B cell (primary cell): ENCODE measurements at regions of chr22 and their contacts with region 1.

Region 1: GRCh38 chr22:31943976-31944699 is at the start of gene YWHAH:
- DNase-seq: peak; percentile 96
- ATAC-seq: peak; percentile 85
- H3K4me3 ChIP-seq: peak within 1 kb of the TSS; percentile 67 to 78 (median 75)
- H3K4me3 Mint-ChIP-seq: no peak within 1 kb of the TSS
- H3K27ac ChIP-seq: peak within 1 kb of the TSS; percentile 82 to 85
- H3K27ac Mint-ChIP-seq: peak within 1 kb of the TSS; percentile 97
- H3K4me1 ChIP-seq: peaks cover 29 to 31% of the 10 kb centered on the region in 2 donors
- H3K4me1 Mint-ChIP-seq: peaks cover 18% of the 10 kb centered on the region
- H3K27me3 ChIP-seq: no peaks in the 10 kb centered on the region
- H3K27me3 Mint-ChIP-seq: no peaks in the 10 kb centered on the region
- CTCF ChIP-seq: no peak
- total RNA-seq, gene YWHAH: 46.6 and 51.1 TPM in 2 replicates

Region 2: DNA sequence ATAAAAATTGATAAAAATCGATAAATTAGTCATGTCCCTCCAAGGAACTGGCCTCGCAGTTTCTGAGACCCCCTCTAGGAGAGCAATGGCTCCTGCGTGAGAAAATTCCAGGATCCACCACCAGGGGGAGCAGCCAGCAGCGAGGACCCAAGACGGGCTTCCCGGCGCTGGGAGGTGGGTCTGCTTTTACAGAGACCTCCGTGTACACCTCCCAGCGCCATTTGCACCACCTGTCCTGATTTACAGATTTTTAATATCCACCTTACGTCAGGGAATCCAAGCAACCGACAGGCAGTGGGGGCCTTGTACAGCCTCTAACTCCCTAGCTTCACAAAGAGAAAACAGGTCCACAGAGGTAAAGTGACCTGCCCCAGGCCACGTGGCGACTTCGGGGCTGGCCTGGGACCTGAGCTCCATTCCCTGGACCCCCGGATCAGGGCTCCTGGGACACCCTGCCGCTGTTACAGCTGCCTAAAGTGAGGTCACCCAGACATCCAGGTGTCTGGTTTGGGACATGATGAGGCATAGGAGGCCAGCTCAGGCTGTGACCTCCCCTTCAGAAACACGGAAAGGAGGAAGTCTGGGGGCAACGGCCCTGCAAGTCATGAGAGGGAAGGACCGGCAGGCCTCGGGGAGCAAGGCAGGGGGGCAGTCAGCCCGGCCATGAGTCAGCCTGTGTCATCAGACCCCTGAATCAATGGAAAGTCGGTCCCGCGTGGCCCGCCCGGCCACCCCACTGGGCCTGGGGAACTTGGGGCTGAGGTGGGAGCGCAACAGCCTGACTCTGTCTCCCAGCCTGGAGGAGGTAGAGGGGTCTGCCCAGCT is 1681.0 kb before region 1 on chr22:
- CTCF ChIA-PET with region 1: no interaction called
- POLR2A ChIA-PET with region 1: no interaction called
- intact Hi-C with region 1: loop called (anchors 5 kb)
- DNase-seq: peak; percentile 86
- ATAC-seq: no peak
- H3K4me3 ChIP-seq: peak overlapping the region in 3 of 5 experiments; percentile 13 to 42 (median 27)
- H3K4me3 Mint-ChIP-seq: peak overlapping the region; percentile 67
- H3K27ac ChIP-seq: no peak overlapping the region
- H3K27ac Mint-ChIP-seq: peak overlapping the region; percentile 37
- H3K4me1 ChIP-seq: peaks cover 20 to 35% of the 10 kb centered on the region in 2 donors
- H3K4me1 Mint-ChIP-seq: peaks cover 31% of the 10 kb centered on the region
- H3K27me3 ChIP-seq: no peaks in the 10 kb centered on the region
- H3K27me3 Mint-ChIP-seq: no peaks in the 10 kb centered on the region
- CTCF ChIP-seq: peak; percentile 100

Region 3: DNA sequence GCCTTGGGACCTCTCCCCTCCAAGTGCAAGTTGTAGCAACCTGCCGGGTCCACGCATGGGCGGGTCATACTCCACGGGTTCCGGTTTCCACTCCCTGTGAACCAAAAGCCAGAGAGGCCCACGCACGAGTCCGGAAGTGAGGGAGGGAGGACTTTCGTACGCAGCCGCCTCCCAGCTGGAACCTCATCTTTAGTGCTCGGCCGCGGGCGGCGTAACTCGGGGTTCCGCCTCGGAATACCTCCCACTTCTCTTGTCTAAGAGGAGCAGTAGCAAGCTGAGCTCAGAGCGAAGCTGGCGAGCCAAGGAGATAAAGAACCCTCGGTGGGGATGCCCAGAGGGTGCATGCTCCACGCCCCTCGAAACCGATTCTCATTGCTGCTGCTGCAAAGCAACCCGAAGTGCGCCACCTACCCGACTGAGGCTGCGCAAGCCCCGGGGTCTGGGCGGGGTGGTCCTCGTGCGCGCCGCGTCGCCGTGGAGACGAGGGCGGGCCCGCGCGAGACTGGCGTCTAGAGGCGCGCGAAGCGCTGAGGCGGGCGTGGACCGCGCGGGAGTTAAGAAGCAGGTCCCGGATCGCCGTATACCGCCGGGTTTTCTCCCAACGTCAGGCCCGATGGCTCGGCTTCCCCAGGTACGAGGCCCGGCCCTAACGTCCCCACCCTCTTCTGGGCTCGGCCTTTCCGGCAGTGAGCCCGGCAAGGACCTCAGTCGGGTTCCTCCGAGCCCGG is 448.0 kb before region 1 on chr22 and contains the start of gene SFI1:
- CTCF ChIA-PET with region 1: no interaction called
- POLR2A ChIA-PET with region 1: no interaction called
- intact Hi-C with region 1: loop called (anchors 10 kb)
- DNase-seq: peak; percentile 97
- ATAC-seq: peak; percentile 87
- H3K4me3 ChIP-seq: peak within 1 kb of the TSS; percentile 71 to 88 (median 80)
- H3K4me3 Mint-ChIP-seq: peak within 1 kb of the TSS; percentile 97
- H3K27ac ChIP-seq: peak within 1 kb of the TSS; percentile 83 to 85
- H3K27ac Mint-ChIP-seq: peak within 1 kb of the TSS; percentile 97
- H3K4me1 ChIP-seq: peaks cover 25 to 45% of the 10 kb centered on the region in 2 donors
- H3K4me1 Mint-ChIP-seq: peaks cover 39% of the 10 kb centered on the region
- H3K27me3 ChIP-seq: no peaks in the 10 kb centered on the region
- H3K27me3 Mint-ChIP-seq: no peaks in the 10 kb centered on the region
- CTCF ChIP-seq: peak; percentile 34
- total RNA-seq, gene SFI1: 182 and 191 TPM in 2 replicates

Region 4: GRCh38 chr22:31829505-31829904 is 114.6 kb before region 1 on chr22:
- CTCF ChIA-PET with region 1: interaction called, 3 read pairs
- POLR2A ChIA-PET with region 1: no interaction called
- intact Hi-C with region 1: loop called (anchors 5 kb)
- DNase-seq: no peak
- ATAC-seq: no peak
- H3K4me3 ChIP-seq: no peak overlapping the region
- H3K4me3 Mint-ChIP-seq: no peak overlapping the region
- H3K27ac ChIP-seq: no peak overlapping the region
- H3K27ac Mint-ChIP-seq: peak overlapping the region; percentile 78
- H3K4me1 ChIP-seq: no peaks in the 10 kb centered on the region
- H3K4me1 Mint-ChIP-seq: peaks cover 6% of the 10 kb centered on the region
- H3K27me3 ChIP-seq: no peaks in the 10 kb centered on the region
- H3K27me3 Mint-ChIP-seq: no peaks in the 10 kb centered on the region
- CTCF ChIP-seq: no peak

Region 5: DNA sequence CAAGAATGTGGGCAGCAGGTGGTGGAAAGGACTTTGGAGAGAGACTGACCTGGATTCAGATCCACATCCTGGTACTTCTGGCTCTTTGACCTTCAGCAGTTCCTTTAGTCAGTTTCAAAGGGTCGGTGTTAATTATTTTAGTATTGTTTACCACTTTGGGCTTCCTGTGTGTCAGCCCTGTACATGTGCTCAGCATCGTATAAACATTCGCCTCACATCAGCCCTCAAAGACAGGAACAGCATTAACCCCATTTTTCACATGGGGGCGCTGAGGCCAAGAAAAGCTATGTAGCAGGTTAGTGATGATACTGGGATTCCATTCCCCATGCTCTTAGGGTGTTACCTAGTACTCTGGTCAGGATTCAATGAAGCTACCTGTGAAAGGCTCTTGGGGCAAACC is 71.9 kb before region 1 on chr22:
- CTCF ChIA-PET with region 1: interaction called, 4 read pairs
- POLR2A ChIA-PET with region 1: no interaction called
- intact Hi-C with region 1: loop called (anchors 10 kb)
- DNase-seq: no peak
- ATAC-seq: no peak
- H3K4me3 ChIP-seq: no peak overlapping the region
- H3K4me3 Mint-ChIP-seq: no peak overlapping the region
- H3K27ac ChIP-seq: no peak overlapping the region
- H3K27ac Mint-ChIP-seq: no peak overlapping the region
- H3K4me1 ChIP-seq: peaks cover 0 to 10% of the 10 kb centered on the region in 2 donors
- H3K4me1 Mint-ChIP-seq: peaks cover 15% of the 10 kb centered on the region
- H3K27me3 ChIP-seq: no peaks in the 10 kb centered on the region
- H3K27me3 Mint-ChIP-seq: no peaks in the 10 kb centered on the region
- CTCF ChIP-seq: no peak

Region 6: GRCh38 chr22:31954535-31955523 is 10.7 kb after region 1 on chr22:
- CTCF ChIA-PET with region 1: no interaction called
- POLR2A ChIA-PET with region 1: no interaction called
- intact Hi-C with region 1: no loop called
- DNase-seq: no peak
- ATAC-seq: no peak
- H3K4me3 ChIP-seq: no peak overlapping the region
- H3K4me3 Mint-ChIP-seq: no peak overlapping the region
- H3K27ac ChIP-seq: no peak overlapping the region
- H3K27ac Mint-ChIP-seq: no peak overlapping the region
- H3K4me1 ChIP-seq: no peaks in the 10 kb centered on the region
- H3K4me1 Mint-ChIP-seq: peaks cover 25% of the 10 kb centered on the region
- H3K27me3 ChIP-seq: no peaks in the 10 kb centered on the region
- H3K27me3 Mint-ChIP-seq: no peaks in the 10 kb centered on the region
- CTCF ChIP-seq: no peak

Region 7: DNA sequence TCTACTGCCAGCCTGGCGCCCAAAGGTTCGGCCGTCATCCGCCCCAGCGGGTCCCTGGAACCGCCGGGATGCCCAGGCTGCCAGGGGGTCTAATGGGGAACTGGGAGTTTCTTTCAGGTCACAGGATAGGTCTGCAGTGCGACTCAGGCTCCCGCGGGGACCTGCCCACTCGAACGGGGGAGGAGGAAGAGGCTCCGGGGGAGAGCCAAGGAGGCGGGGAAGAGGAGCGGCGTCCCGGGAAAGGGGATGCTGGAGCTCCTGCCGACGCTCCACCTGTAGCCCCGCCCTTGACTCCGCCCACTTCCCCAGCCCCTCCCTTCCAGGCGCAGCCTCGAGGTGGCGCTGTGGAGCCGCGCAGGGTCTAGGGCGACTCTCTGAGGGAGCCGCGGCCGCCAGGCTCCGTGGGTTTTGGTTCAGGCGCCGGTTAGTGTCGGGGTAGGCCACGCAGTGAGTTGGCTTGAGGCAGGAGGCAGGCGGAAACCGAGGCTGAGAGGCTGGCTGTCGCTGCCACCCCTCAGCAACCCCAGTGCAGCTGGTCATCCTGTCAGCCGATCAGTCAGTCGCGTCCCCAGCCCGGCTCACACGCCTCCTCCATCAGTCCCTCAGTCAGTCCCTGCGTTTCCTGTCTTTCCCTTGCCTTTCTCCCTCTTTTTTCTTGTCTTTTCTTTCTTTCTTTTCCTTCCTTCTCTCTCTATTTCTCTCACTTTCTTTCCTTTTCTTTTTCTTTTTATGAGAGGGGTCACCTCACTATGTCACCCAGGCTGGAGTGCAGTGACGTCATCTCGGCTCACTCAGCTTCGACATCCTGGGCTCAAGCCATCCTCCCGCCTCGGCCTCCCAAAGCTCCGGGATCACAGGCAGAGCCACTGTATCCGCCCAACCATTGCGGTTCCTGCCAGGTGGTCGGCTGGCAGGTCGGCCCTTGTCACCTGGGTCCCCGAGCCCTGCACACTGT is 26.6 kb after region 1 on chr22:
- CTCF ChIA-PET with region 1: interaction called, 15 read pairs
- POLR2A ChIA-PET with region 1: no interaction called
- intact Hi-C with region 1: loop called (anchors 1 kb)
- DNase-seq: peak; percentile 89
- ATAC-seq: peak; percentile 93
- H3K4me3 ChIP-seq: peak overlapping the region in 4 of 5 experiments; percentile 33 to 72 (median 48)
- H3K4me3 Mint-ChIP-seq: peak overlapping the region; percentile 88
- H3K27ac ChIP-seq: peak overlapping the region; percentile 9 to 37
- H3K27ac Mint-ChIP-seq: peak overlapping the region; percentile 41
- H3K4me1 ChIP-seq: peaks cover 16 to 21% of the 10 kb centered on the region in 2 donors
- H3K4me1 Mint-ChIP-seq: peaks cover 19% of the 10 kb centered on the region
- H3K27me3 ChIP-seq: peaks cover 0 to 4% (median 0%) of the 10 kb centered on the region in 4 experiments
- H3K27me3 Mint-ChIP-seq: peaks cover under 1% of the 10 kb centered on the region
- CTCF ChIP-seq: peak; percentile 87